ENCODE measurements at regions of chr6 and their contacts with region 1.

Region 1: GRCh38 chr6:158686791-158687381 is 37.0 kb downstream of the SYTL3 start:
- DNase-seq: no peak
- H3K4me3 ChIP-seq: no peak overlapping the region
- H3K27ac ChIP-seq: no peak overlapping the region
- H3K4me1 ChIP-seq: no peaks in the 10 kb centered on the region
- CTCF ChIP-seq: no peak

Region 2: GRCh38 chr6:158213925-158214674 is 472.8 kb before region 1 on chr6:
- CTCF ChIA-PET with region 1: no interaction called
- POLR2A ChIA-PET with region 1: no interaction called
- intact Hi-C with region 1: loop called (anchors 1 kb)
- DNase-seq: peak; percentile 78
- H3K4me3 ChIP-seq: no peak overlapping the region
- H3K27ac ChIP-seq: no peak overlapping the region
- H3K4me1 ChIP-seq: no peaks in the 10 kb centered on the region
- CTCF ChIP-seq: peak; percentile 94

Region 3: GRCh38 chr6:158660333-158660754 is 26.5 kb before region 1 on chr6:
- CTCF ChIA-PET with region 1: no interaction called
- POLR2A ChIA-PET with region 1: interaction called, 4 read pairs
- intact Hi-C with region 1: loop called (anchors 1 kb)
- DNase-seq: peak; percentile 67
- H3K4me3 ChIP-seq: no peak overlapping the region
- H3K27ac ChIP-seq: no peak overlapping the region
- H3K4me1 ChIP-seq: no peaks in the 10 kb centered on the region
- CTCF ChIP-seq: peak; percentile 83

Measured in OCI-LY7 (cell line).